Posterior vena cava (tissue), 2 donors: ENCODE measurements at regions of chr4 and their contacts with region 1.

Region 1: DNA sequence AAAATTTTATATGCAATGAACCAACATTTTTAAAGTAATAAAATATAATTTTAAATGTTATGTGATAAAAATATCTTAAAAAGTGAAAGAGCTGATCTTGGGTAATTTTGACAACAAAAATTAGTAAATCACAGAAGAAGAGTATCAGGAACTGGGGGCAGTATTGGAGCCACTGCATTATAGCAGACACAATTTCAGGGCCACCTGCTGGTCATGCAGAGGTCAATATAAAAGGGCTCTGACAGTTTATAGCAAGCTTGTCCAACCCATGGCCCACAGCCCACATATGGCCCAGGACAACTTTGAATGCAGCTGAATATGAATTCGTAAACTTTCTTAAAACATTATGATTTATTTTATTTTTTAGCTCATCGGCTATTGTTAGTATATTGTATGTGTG is 13.0 kb upstream of the LEF1 start:
- DNase-seq: no peak

Region 2: GRCh38 chr4:107922486-107923483 is 258.9 kb before region 1 on chr4:
- intact Hi-C with region 1: loop called in 1 of 2 experiments (anchors 10 kb)
- DNase-seq: no peak